Vagina (tissue), 2 donors: ENCODE measurements at regions of chr4 and their contacts with region 1.

Region 1: DNA sequence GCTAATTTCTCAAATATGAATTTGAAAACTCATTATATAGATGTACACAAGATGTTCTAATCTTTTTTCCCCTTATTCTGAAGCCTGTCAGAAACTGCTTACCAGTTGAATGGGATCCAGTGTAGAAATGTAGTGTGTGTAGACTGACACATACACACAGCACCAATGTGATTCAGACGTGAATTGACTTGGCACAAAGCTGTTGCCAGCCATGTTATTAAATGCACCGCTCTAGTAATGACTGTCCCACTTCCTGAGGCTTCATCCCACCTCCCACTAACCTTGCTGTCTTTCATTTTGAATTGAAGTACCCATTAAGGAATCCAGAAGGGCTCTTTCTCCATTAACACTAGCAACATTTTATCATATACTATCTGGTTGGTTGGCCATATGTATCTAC is 146.6 kb downstream of the PPA2 start:
- DNase-seq: no peak
- H3K4me3 ChIP-seq: no peak overlapping the region
- H3K27ac ChIP-seq: no peak overlapping the region
- H3K4me1 ChIP-seq: no peaks in the 10 kb centered on the region
- H3K27me3 ChIP-seq: no peaks in the 10 kb centered on the region
- CTCF ChIP-seq: no peak
- POLR2A ChIP-seq: no peak

Region 2: DNA sequence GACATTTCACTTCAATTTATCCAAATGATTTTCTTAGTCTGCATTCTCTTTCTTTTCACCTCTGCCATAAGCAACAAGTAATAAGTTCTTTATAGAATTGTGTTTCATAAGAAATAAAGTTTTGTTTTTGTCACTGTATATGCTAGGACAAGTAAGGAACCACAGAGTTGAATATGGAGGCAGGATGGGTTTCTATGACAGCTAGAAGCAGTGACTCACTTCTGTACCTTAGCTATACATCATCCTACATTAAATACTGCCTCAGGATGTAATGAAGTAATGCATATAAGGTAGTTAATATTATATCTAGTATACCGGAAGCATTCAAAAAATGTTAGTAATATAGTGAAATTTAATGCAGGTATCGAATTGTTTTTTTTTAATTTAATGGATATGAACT is 18.6 kb after region 1 on chr4:
- intact Hi-C with region 1: loop called (anchors 2 kb)
- DNase-seq: no peak
- H3K4me3 ChIP-seq: no peak overlapping the region
- H3K27ac ChIP-seq: no peak overlapping the region
- H3K4me1 ChIP-seq: peaks cover 4% of the 10 kb centered on the region
- H3K27me3 ChIP-seq: no peaks in the 10 kb centered on the region
- CTCF ChIP-seq: no peak
- POLR2A ChIP-seq: no peak

Region 3: DNA sequence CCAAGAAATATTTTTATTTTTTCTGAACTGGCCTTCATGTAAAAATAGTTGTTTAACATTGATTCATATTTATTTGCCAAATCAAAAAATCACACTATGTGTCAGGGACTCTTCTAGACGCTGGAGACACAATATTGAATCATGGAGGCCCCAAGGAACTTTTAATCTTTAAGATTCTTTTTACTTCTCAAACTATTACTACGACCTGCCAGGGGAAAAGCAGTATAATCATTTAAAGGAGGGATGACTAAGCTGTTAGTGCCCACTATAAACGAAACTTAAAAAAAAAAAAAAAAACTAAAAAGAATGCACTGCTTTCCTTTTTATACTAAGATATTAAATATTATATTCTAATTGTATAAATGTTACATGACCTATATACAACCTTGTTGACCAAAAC is 61.9 kb after region 1 on chr4:
- intact Hi-C with region 1: no loop called
- DNase-seq: no peak
- H3K4me3 ChIP-seq: no peak overlapping the region
- H3K27ac ChIP-seq: no peak overlapping the region
- H3K4me1 ChIP-seq: no peaks in the 10 kb centered on the region
- H3K27me3 ChIP-seq: no peaks in the 10 kb centered on the region
- CTCF ChIP-seq: no peak
- POLR2A ChIP-seq: no peak